CD8-positive, alpha-beta T cell (primary cell): ENCODE measurements at regions of chr6 and their contacts with region 1.

Region 1: GRCh38 chr6:158220786-158221442 is 52.8 kb downstream of the GTF2H5 start:
- DNase-seq: peak; percentile 48 to 84 (median 75)
- ATAC-seq: peak; percentile 91
- H3K4me3 ChIP-seq: no peak overlapping the region
- H3K4me3 Mint-ChIP-seq: no peak overlapping the region
- H3K27ac ChIP-seq: no peak overlapping the region
- H3K27ac Mint-ChIP-seq: no peak overlapping the region
- H3K4me1 ChIP-seq: no peaks in the 10 kb centered on the region
- H3K4me1 Mint-ChIP-seq: peaks cover 3% of the 10 kb centered on the region
- H3K27me3 ChIP-seq: no peaks in the 10 kb centered on the region
- H3K27me3 Mint-ChIP-seq: no peaks in the 10 kb centered on the region
- CTCF ChIP-seq: peak; percentile 99

Region 2: GRCh38 chr6:157912326-157912725 is 308.6 kb before region 1 on chr6:
- CTCF ChIA-PET with region 1: no interaction called
- POLR2A ChIA-PET with region 1: no interaction called
- intact Hi-C with region 1: no loop called
- DNase-seq: no peak
- ATAC-seq: no peak
- H3K4me3 ChIP-seq: no peak overlapping the region
- H3K4me3 Mint-ChIP-seq: no peak overlapping the region
- H3K27ac ChIP-seq: no peak overlapping the region
- H3K27ac Mint-ChIP-seq: no peak overlapping the region
- H3K4me1 ChIP-seq: no peaks in the 10 kb centered on the region
- H3K4me1 Mint-ChIP-seq: peaks cover 8% of the 10 kb centered on the region
- H3K27me3 ChIP-seq: no peaks in the 10 kb centered on the region
- H3K27me3 Mint-ChIP-seq: no peaks in the 10 kb centered on the region
- CTCF ChIP-seq: no peak

Region 3: GRCh38 chr6:158387036-158387435 is 166.1 kb after region 1 on chr6:
- CTCF ChIA-PET with region 1: interaction called, 21 read pairs
- POLR2A ChIA-PET with region 1: no interaction called
- intact Hi-C with region 1: loop called (anchors 1 to 2 kb)
- DNase-seq: peak in 2 of 9 experiments; percentile 36 to 54
- ATAC-seq: no peak
- H3K4me3 ChIP-seq: no peak overlapping the region
- H3K4me3 Mint-ChIP-seq: no peak overlapping the region
- H3K27ac ChIP-seq: no peak overlapping the region
- H3K27ac Mint-ChIP-seq: no peak overlapping the region
- H3K4me1 ChIP-seq: no peaks in the 10 kb centered on the region
- H3K4me1 Mint-ChIP-seq: peaks cover 8% of the 10 kb centered on the region
- H3K27me3 ChIP-seq: no peaks in the 10 kb centered on the region
- H3K27me3 Mint-ChIP-seq: no peaks in the 10 kb centered on the region
- CTCF ChIP-seq: peak; percentile 26

Region 4: GRCh38 chr6:158595223-158595622 is 374.3 kb after region 1 on chr6:
- CTCF ChIA-PET with region 1: interaction called, 25 read pairs
- POLR2A ChIA-PET with region 1: no interaction called
- intact Hi-C with region 1: loop called in 1 of 2 experiments (anchors 1 kb)
- DNase-seq: peak in 4 of 9 experiments; percentile 17 to 50 (median 33)
- ATAC-seq: peak; percentile 67
- H3K4me3 ChIP-seq: no peak overlapping the region
- H3K4me3 Mint-ChIP-seq: no peak overlapping the region
- H3K27ac ChIP-seq: no peak overlapping the region
- H3K27ac Mint-ChIP-seq: no peak overlapping the region
- H3K4me1 ChIP-seq: no peaks in the 10 kb centered on the region
- H3K4me1 Mint-ChIP-seq: peaks cover 4% of the 10 kb centered on the region
- H3K27me3 ChIP-seq: no peaks in the 10 kb centered on the region
- H3K27me3 Mint-ChIP-seq: no peaks in the 10 kb centered on the region
- CTCF ChIP-seq: no peak

Region 5: GRCh38 chr6:158605266-158605878 is 384.5 kb after region 1 on chr6:
- CTCF ChIA-PET with region 1: interaction called, 25 read pairs
- POLR2A ChIA-PET with region 1: no interaction called
- intact Hi-C with region 1: loop called in 1 of 2 experiments (anchors 1 kb)
- DNase-seq: peak; percentile 14 to 71 (median 52)
- ATAC-seq: peak; percentile 87
- H3K4me3 ChIP-seq: no peak overlapping the region
- H3K4me3 Mint-ChIP-seq: no peak overlapping the region
- H3K27ac ChIP-seq: peak overlapping the region in 1 of 2 experiments; percentile 1
- H3K27ac Mint-ChIP-seq: no peak overlapping the region
- H3K4me1 ChIP-seq: no peaks in the 10 kb centered on the region
- H3K4me1 Mint-ChIP-seq: peaks cover 2% of the 10 kb centered on the region
- H3K27me3 ChIP-seq: no peaks in the 10 kb centered on the region
- H3K27me3 Mint-ChIP-seq: no peaks in the 10 kb centered on the region
- CTCF ChIP-seq: peak; percentile 69